Activated CD4-positive, alpha-beta T cell treated with anti-CD3 and anti-CD28 coated beads for 36 hours (primary cell): ENCODE measurements at regions of chr9 and their contacts with region 1.

Region 1: DNA sequence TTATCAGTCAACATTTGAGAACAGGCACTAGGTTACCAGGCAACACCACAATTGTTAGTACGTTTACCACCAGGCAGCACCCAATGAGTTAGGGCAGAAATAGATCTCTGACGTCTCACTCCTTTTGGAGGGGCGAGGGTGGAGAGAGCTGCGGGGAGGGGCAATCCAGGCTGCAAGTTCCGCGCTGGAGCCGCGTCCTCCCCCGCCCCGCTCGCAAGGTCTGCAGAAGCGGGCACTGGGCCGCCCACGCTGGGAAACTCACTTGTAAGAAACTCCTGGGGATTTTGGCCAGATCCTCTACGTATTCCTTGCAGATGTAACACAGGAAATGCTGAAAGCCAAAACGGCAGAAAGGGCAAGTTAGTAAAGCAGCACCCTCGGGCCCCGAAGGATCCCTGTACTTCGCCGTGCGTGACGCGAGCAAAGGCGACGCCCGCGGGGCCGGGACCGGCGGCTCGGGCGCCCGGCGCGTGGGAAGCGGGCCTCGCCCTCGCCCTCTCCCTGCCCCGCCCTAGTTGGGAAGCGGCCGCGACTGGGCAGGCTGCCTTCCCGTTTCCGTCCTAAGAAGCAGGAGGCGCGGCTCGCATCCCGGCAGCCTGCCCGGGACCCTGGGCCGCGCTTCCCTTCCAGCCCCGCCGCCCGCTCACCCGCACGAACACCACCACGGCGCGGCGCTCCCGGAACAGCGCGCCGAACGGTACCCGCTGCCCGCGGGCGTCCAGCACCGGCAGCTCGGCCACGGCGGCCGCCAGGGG is 497 bp downstream of the PRXL2C start:
- DNase-seq: peak; percentile 78
- ATAC-seq: peak; percentile 69
- H3K4me3 Mint-ChIP-seq: peak overlapping the region; percentile 78
- H3K27ac Mint-ChIP-seq: peak overlapping the region; percentile 78
- H3K4me1 Mint-ChIP-seq: peaks cover 15% of the 10 kb centered on the region
- H3K27me3 Mint-ChIP-seq: no peaks in the 10 kb centered on the region

Region 2: GRCh38 chr9:96327694-96328352 is 326.8 kb before region 1 on chr9:
- CTCF ChIA-PET with region 1: interaction called, 4 read pairs
- POLR2A ChIA-PET with region 1: no interaction called
- intact Hi-C with region 1: loop called (anchors 2 to 5 kb)
- DNase-seq: peak; percentile 57
- ATAC-seq: peak; percentile 81
- H3K4me3 Mint-ChIP-seq: no peak overlapping the region
- H3K27ac Mint-ChIP-seq: no peak overlapping the region
- H3K4me1 Mint-ChIP-seq: no peaks in the 10 kb centered on the region
- H3K27me3 Mint-ChIP-seq: no peaks in the 10 kb centered on the region

Region 3: GRCh38 chr9:96441798-96442445 is 212.7 kb before region 1 on chr9:
- CTCF ChIA-PET with region 1: interaction called, 5 read pairs
- POLR2A ChIA-PET with region 1: no interaction called
- intact Hi-C with region 1: loop called (anchors 1 to 5 kb)
- DNase-seq: peak; percentile 28
- ATAC-seq: peak; percentile 65
- H3K4me3 Mint-ChIP-seq: no peak overlapping the region
- H3K27ac Mint-ChIP-seq: no peak overlapping the region
- H3K4me1 Mint-ChIP-seq: no peaks in the 10 kb centered on the region
- H3K27me3 Mint-ChIP-seq: no peaks in the 10 kb centered on the region

Region 4: DNA sequence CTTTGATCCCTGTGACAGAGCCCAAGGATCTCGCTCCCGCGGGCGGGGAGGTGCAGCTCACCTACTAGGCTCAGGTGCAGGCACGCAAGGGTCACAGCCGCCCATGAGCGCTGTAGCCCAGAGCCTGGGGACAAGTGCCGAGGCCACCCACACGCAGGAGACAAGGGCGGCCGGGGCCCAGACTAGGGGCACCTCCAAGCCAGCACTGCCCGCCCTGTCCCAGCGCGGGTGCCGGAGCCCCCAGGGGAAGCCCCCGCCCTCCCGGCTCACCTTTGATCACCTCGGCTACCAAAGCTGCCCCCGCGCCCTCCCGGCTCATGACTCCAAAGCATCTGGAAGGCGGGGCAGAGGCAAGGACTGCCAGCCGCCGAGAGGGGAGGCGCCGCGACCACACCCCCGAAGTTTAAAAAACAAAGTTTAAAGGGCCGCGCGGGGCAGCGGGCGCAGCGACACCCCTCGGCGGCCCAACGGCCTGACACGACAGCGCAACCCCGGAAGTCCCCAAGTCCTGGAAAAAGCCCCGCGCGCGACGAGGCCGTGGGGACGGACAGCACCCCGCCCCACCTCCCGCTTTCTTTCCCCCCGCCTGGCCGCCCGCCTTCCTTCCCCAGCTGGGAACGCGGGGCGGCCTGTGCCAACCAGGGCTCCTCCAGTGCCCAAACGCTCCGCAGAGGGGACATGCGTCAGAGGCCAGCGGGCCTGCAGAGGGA is 88.0 kb before region 1 on chr9:
- CTCF ChIA-PET with region 1: no interaction called
- POLR2A ChIA-PET with region 1: no interaction called
- intact Hi-C with region 1: loop called (anchors 1 to 2 kb)
- DNase-seq: peak; percentile 85
- ATAC-seq: peak; percentile 78
- H3K4me3 Mint-ChIP-seq: peak overlapping the region; percentile 66
- H3K27ac Mint-ChIP-seq: peak overlapping the region; percentile 82
- H3K4me1 Mint-ChIP-seq: peaks cover 27% of the 10 kb centered on the region
- H3K27me3 Mint-ChIP-seq: peaks cover 2% of the 10 kb centered on the region

Region 5: DNA sequence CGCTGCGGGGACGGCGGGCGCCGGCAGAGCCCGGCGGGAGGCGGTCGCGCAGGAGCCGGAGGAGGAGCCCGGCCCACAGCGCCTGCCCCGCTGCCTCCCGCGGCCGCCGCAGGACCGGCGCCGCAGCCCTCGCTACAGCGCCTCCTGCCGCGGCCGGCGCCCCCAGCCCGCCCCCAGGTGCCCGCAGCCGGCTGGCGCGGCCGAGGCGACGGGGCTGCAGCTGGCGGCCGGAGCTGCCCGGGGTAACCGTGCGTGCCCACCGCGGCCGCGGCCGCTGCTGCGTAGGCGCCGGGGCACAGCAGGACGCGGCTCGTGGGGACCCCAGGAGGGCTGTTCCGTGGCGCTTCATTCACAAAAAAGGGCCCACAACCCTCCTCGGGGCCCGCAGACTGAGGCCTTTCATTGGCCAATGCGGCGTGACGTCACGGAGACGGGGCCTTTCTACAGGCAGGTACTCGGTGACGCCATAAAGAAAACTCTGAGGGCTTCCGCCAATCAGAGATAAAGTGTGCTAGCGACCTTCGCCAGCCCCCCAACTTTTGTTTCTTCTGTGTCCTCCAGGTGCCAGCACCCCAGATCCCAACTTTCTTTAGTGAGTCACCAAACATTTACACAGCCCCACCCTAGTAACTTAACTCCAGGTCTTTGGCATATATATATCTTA is 35.0 kb before region 1 on chr9 and contains the start of gene CDC14B:
- CTCF ChIA-PET with region 1: no interaction called
- POLR2A ChIA-PET with region 1: no interaction called
- intact Hi-C with region 1: loop called in 1 of 2 experiments (anchors 2 kb)
- DNase-seq: peak; percentile 90
- ATAC-seq: peak; percentile 82
- H3K4me3 Mint-ChIP-seq: peak within 1 kb of the TSS; percentile 66
- H3K27ac Mint-ChIP-seq: peak within 1 kb of the TSS; percentile 55
- H3K4me1 Mint-ChIP-seq: peaks cover 8% of the 10 kb centered on the region
- H3K27me3 Mint-ChIP-seq: peaks cover 39% of the 10 kb centered on the region
- total RNA-seq, gene CDC14B: 1.1 to 1.5 TPM

Region 6: GRCh38 chr9:96644137-96644536 is 10.5 kb before region 1 on chr9:
- CTCF ChIA-PET with region 1: no interaction called
- POLR2A ChIA-PET with region 1: no interaction called
- intact Hi-C with region 1: no loop called
- DNase-seq: no peak
- ATAC-seq: no peak
- H3K4me3 Mint-ChIP-seq: no peak overlapping the region
- H3K27ac Mint-ChIP-seq: no peak overlapping the region
- H3K4me1 Mint-ChIP-seq: no peaks in the 10 kb centered on the region
- H3K27me3 Mint-ChIP-seq: no peaks in the 10 kb centered on the region

Region 7: DNA sequence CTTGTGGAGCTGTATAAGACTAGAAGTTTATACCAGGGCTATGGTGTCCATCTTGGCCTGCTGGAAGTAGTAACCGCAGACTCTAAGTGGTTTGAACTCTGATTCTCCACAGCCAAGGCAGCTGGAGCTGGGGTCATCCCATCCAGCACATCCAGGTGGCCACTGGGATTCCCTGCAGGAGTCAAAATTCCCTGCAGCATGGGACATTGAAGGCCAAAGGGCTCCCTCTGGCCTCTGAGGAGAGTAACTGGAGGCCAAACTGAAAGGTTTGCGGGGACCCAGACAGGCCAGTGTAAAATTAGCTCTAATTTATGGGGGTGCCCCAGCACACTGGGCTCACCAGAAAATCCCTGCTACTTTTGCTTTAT is 12.7 kb after region 1 on chr9:
- CTCF ChIA-PET with region 1: interaction called, 14 read pairs
- POLR2A ChIA-PET with region 1: no interaction called
- intact Hi-C with region 1: no loop called
- DNase-seq: no peak
- ATAC-seq: no peak
- H3K4me3 Mint-ChIP-seq: no peak overlapping the region
- H3K27ac Mint-ChIP-seq: no peak overlapping the region
- H3K4me1 Mint-ChIP-seq: no peaks in the 10 kb centered on the region
- H3K27me3 Mint-ChIP-seq: peaks cover 9% of the 10 kb centered on the region

Region 8: DNA sequence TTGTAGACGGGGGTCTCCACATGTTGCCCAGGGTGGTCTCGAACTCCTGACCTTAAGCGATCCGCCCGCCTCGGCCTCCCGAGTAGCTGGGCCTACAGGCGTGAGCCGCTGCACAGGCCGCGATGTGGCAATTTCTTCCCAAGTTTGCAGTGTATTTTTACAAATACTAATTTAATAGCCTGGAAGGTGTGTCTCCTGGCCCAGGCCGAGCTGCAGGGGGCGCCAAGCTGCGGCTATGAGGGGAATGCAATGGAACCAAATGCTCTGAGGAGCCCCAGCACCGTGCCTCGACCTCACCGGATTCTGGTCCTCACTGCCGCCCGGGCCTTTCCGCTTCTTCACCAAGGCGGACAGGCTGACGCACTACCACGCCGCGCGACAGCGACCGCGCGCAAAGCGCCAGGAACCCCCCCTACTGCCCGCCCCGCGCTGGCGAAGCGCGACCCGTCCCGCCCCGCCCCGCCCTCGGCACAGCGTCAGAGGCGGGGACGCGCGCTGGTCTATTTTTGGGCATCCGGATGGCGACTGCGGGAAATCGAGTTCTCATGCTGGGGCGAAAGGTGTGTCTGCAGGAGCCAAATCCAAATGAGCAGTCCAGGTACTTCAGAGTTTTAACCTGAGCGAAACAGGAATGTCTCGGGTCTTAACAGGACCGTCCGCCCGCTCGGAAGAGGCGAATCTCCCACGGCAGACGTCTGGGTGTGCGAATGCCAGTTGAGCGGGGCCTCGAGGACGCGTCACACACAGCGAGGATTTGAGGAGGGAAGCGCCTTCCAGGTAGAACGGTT is 32.1 kb after region 1 on chr9:
- CTCF ChIA-PET with region 1: no interaction called
- POLR2A ChIA-PET with region 1: no interaction called
- intact Hi-C with region 1: loop called in 1 of 2 experiments (anchors 2 kb)
- DNase-seq: peak; percentile 85
- ATAC-seq: peak; percentile 97
- H3K4me3 Mint-ChIP-seq: peak overlapping the region; percentile 76
- H3K27ac Mint-ChIP-seq: peak overlapping the region; percentile 68
- H3K4me1 Mint-ChIP-seq: peaks cover 7% of the 10 kb centered on the region
- H3K27me3 Mint-ChIP-seq: peaks cover 15% of the 10 kb centered on the region